HCT116 (cell line): ENCODE measurements at regions of chrX and their contacts with region 1.

Region 1: GRCh38 chrX:111244235-111244750 is 26.0 kb downstream of the CAPN6 start:
- DNase-seq: peak; percentile 3
- ATAC-seq: no peak
- H3K4me3 ChIP-seq: no peak overlapping the region
- H3K27ac ChIP-seq: no peak overlapping the region
- H3K4me1 ChIP-seq: no peaks in the 10 kb centered on the region
- H3K27me3 ChIP-seq: peaks cover 3% of the 10 kb centered on the region; the same call in 1 of the 2 replicates
- CTCF ChIP-seq: peak; percentile 16 to 46 (median 29); a peak in 3 of 6 replicates
- POLR2A ChIP-seq: no peak
- RAD21 ChIP-seq: peak; percentile 57

Region 2: DNA sequence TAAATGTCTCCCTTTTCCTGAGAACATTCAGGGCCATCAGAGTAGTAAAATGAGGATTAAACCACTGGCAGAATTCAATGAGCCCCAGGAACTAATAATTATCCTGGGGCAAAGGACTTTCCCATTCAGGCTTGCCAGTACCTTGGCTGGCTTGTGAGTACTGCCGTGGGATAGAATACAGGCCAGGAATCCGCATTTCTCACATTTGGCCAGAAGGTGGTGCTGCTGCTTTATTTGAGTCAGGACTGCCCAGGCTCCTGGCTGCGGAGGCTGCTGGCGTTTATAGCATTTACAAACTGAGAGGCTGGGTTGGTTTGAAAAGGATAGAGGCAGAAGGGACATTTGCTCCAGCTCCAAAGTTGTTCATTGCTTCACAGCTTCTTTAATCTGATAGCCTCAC is 794.2 kb before region 1 on chrX:
- CTCF ChIA-PET with region 1: no interaction called
- POLR2A ChIA-PET with region 1: no interaction called
- RAD21 ChIA-PET with region 1: no interaction called
- intact Hi-C with region 1: loop called (anchors 10 kb)
- DNase-seq: peak; percentile 29
- ATAC-seq: peak; percentile 94
- H3K4me3 ChIP-seq: no peak overlapping the region
- H3K27ac ChIP-seq: no peak overlapping the region
- H3K4me1 ChIP-seq: no peaks in the 10 kb centered on the region
- H3K27me3 ChIP-seq: peaks cover 27% of the 10 kb centered on the region
- CTCF ChIP-seq: peak; percentile 41 to 65 (median 61); a peak in 5 of 6 replicates
- POLR2A ChIP-seq: no peak
- RAD21 ChIP-seq: peak; percentile 73

Region 3: GRCh38 chrX:110853610-110854009 is 390.7 kb before region 1 on chrX:
- CTCF ChIA-PET with region 1: interaction called, 10 read pairs
- POLR2A ChIA-PET with region 1: no interaction called
- RAD21 ChIA-PET with region 1: interaction called in 1 of 2 experiments, 3 read pairs
- intact Hi-C with region 1: loop called (anchors 5 kb)
- DNase-seq: no peak
- ATAC-seq: peak; percentile 61; the same call in 1 of the 2 replicates
- H3K4me3 ChIP-seq: no peak overlapping the region
- H3K27ac ChIP-seq: no peak overlapping the region
- H3K4me1 ChIP-seq: peaks cover 0 to 4% of the 10 kb centered on the region in 2 experiments; a peak in 1 of 4 replicates
- H3K27me3 ChIP-seq: no peaks in the 10 kb centered on the region
- CTCF ChIP-seq: peak; percentile 4 to 15 (median 12); a peak in 1 of 6 replicates
- POLR2A ChIP-seq: no peak
- RAD21 ChIP-seq: no peak

Region 4: DNA sequence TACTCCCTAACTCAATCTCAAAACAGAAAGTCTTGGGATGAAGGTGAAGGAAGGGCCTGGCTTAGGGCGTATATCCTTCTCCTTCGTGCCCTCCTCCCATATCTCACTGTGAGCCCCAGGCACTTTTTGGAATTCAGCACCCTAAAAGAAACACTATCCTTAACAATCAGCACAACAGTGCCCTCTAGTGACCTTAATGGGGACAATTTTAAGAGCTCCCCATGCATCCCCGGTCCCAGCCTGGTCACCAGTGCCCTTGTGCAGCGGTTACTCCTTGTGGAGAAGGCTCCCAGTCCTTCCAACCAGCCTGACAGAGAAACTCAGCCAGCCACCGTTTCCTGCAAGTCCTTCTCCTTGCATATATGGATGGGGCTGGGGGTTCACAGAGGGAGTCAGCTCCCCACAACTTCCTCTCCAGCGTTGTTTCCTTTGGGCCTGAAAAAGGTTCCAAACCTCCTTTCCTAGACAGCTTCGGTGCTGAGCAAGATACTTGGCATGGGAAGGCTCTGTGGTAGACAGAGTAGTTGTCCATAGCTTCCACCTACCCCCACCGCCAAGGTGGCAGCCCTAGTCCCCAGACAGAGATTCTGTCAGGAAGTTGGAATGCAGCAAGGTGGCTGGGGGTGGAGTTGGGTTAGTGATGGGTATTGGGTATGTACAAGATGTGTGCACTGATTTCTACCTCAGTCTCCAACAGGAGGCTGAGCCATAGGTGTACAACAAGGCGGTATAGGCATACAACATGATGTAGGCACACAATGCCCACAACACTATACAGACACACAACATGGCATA is 143.9 kb before region 1 on chrX:
- CTCF ChIA-PET with region 1: interaction called, 3 read pairs
- POLR2A ChIA-PET with region 1: no interaction called
- RAD21 ChIA-PET with region 1: no interaction called
- intact Hi-C with region 1: loop called (anchors 1 kb)
- DNase-seq: peak; percentile 10
- ATAC-seq: peak; percentile 79
- H3K4me3 ChIP-seq: no peak overlapping the region
- H3K27ac ChIP-seq: no peak overlapping the region
- H3K4me1 ChIP-seq: no peaks in the 10 kb centered on the region
- H3K27me3 ChIP-seq: no peaks in the 10 kb centered on the region
- CTCF ChIP-seq: peak; percentile 24 to 47 (median 25); a peak in 4 of 6 replicates
- POLR2A ChIP-seq: no peak
- RAD21 ChIP-seq: peak; percentile 18; the same call in 1 of the 2 replicates

Region 5: GRCh38 chrX:111168314-111168713 is 76.0 kb before region 1 on chrX:
- CTCF ChIA-PET with region 1: interaction called, 9 read pairs
- POLR2A ChIA-PET with region 1: no interaction called
- RAD21 ChIA-PET with region 1: no interaction called
- intact Hi-C with region 1: loop called (anchors 5 kb)
- DNase-seq: no peak
- ATAC-seq: no peak
- H3K4me3 ChIP-seq: no peak overlapping the region
- H3K27ac ChIP-seq: no peak overlapping the region
- H3K4me1 ChIP-seq: no peaks in the 10 kb centered on the region
- H3K27me3 ChIP-seq: no peaks in the 10 kb centered on the region
- CTCF ChIP-seq: peak; percentile 12 to 29 (median 14); a peak in 2 of 6 replicates
- POLR2A ChIP-seq: no peak
- RAD21 ChIP-seq: peak; percentile 36

Region 6: GRCh38 chrX:111719426-111720210 is 475.3 kb after region 1 on chrX:
- CTCF ChIA-PET with region 1: no interaction called
- POLR2A ChIA-PET with region 1: no interaction called
- RAD21 ChIA-PET with region 1: no interaction called
- intact Hi-C with region 1: no loop called
- DNase-seq: no peak
- ATAC-seq: no peak
- H3K4me3 ChIP-seq: no peak overlapping the region
- H3K27ac ChIP-seq: no peak overlapping the region
- H3K4me1 ChIP-seq: no peaks in the 10 kb centered on the region
- H3K27me3 ChIP-seq: no peaks in the 10 kb centered on the region
- CTCF ChIP-seq: peak in 1 of 3 experiments; percentile 34; a peak in 1 of 6 replicates
- POLR2A ChIP-seq: no peak
- RAD21 ChIP-seq: no peak